ENCODE measurements at regions of chr3 and their contacts with region 1.

Region 1: GRCh38 chr3:47989981-47990440 is 26.2 kb downstream of the MAP4 start:
- DNase-seq: peak; percentile 94
- ATAC-seq: peak; percentile 98
- H3K4me3 ChIP-seq: no peak overlapping the region
- H3K27ac ChIP-seq: no peak overlapping the region
- H3K4me1 ChIP-seq: peaks cover 16% of the 10 kb centered on the region
- H3K27me3 ChIP-seq: no peaks in the 10 kb centered on the region
- CTCF ChIP-seq: peak; percentile 98

Region 2: GRCh38 chr3:47047673-47048072 is 942.3 kb before region 1 on chr3:
- CTCF ChIA-PET with region 1: no interaction called
- POLR2A ChIA-PET with region 1: no interaction called
- intact Hi-C with region 1: no loop called
- DNase-seq: no peak
- ATAC-seq: no peak
- H3K4me3 ChIP-seq: no peak overlapping the region
- H3K27ac ChIP-seq: no peak overlapping the region
- H3K4me1 ChIP-seq: no peaks in the 10 kb centered on the region
- H3K27me3 ChIP-seq: no peaks in the 10 kb centered on the region
- CTCF ChIP-seq: no peak

Region 3: DNA sequence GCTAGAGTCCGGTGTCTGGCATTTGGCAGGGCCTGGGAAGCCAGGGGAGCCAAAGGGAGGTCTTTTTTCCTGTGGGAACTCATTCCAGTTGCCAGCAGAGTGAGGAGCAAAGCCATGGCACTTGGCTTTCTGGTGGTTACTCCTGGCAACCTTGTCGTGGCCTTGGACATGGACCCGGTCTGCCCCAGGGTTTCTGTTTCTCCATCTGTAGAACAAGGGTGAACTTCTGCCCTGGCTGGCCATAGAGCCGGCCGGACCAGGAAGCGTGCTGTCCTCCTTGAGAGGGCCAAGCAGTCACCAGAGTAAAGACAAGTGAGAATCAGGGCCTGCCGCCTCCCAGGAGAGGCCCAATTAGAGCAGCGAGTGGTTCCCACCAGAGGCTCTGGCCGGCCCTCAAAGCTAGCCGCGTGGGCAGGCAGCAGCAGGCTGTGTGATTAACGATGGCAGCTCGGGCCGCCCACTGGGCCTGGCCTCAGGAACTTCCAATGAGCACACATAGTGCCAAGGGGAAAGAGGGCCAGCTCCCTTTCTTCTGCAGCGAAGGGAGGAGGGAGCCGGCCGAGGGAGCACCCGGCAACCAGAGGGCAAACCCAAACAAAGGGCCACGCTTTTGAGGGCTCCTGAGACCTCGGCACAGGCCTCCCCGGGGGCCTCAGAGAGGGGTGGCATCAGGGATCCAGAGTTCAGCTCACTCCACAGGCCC is 447.4 kb before region 1 on chr3:
- CTCF ChIA-PET with region 1: no interaction called
- POLR2A ChIA-PET with region 1: no interaction called
- intact Hi-C with region 1: no loop called
- DNase-seq: no peak
- ATAC-seq: no peak
- H3K4me3 ChIP-seq: no peak overlapping the region
- H3K27ac ChIP-seq: no peak overlapping the region
- H3K4me1 ChIP-seq: no peaks in the 10 kb centered on the region
- H3K27me3 ChIP-seq: no peaks in the 10 kb centered on the region
- CTCF ChIP-seq: no peak

Region 4: DNA sequence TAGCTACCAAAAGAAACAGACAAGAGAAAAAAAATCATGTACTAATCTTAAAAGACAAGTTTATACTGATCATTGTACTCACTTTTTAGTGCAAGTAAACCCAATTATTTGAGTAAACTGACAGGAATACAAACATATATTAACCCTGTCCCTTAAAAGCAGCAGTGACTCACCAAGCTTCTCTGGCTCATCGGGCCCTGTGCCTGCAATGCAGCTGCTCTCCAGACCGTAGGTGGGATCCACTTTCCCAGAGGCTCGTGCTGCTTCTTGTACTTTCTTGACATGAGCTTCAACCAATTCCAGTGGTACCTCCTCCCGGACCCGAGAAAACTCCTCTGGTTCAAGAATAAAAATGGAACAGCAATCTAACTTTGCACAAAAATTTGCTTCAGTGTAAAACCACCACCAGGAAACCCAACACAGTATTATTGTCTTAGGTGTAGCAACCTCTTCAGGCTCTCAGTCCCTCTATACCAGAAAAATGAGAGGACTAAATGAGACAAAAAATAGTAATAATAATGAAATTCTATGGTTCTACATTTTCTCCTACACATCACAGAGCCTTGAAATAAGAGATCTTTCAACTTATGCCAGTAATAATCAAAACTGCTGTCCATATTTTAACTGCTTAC is 328.8 kb before region 1 on chr3:
- CTCF ChIA-PET with region 1: no interaction called
- POLR2A ChIA-PET with region 1: no interaction called
- intact Hi-C with region 1: no loop called
- DNase-seq: peak; percentile 73
- ATAC-seq: peak; percentile 99
- H3K4me3 ChIP-seq: no peak overlapping the region
- H3K27ac ChIP-seq: peak overlapping the region; percentile 28
- H3K4me1 ChIP-seq: peaks cover 13% of the 10 kb centered on the region
- H3K27me3 ChIP-seq: no peaks in the 10 kb centered on the region
- CTCF ChIP-seq: no peak

Region 5: GRCh38 chr3:47877719-47878118 is 112.3 kb before region 1 on chr3:
- CTCF ChIA-PET with region 1: interaction called, 4 read pairs
- POLR2A ChIA-PET with region 1: no interaction called
- intact Hi-C with region 1: loop called (anchors 2 kb)
- DNase-seq: no peak
- ATAC-seq: peak; percentile 40
- H3K4me3 ChIP-seq: no peak overlapping the region
- H3K27ac ChIP-seq: no peak overlapping the region
- H3K4me1 ChIP-seq: no peaks in the 10 kb centered on the region
- H3K27me3 ChIP-seq: no peaks in the 10 kb centered on the region
- CTCF ChIP-seq: no peak

Region 6: DNA sequence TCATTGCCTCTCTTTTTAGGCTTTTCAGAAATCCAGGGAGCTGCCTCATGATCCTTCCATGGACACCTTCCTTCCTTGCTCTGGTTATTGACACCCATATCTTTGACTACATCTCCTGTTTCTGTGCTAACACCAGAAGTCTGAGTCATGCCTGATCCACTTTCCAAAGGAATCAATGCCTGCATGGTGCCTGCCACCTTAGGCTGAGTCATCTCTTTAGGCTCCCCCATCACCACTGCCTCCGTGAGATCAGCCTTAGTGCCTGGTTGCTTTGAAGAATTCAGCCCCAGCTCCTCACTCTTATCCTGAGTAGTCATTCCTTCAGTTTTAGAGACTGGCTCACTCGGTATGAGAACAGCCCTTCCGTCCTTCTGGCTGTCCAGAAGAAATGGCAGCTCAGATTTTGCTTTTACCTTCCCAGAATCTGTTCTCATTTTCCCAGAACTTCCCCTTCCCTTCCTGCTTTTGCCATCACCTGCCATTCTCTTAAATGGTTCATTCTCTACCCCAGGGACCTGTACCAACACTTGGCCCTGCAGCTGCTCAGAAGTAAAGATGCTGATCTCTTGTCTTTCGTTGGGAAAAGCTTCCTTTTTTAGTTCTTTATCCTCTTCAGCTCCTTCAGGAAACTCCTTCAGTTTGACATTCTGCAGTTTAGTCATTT is 79.1 kb before region 1 on chr3:
- CTCF ChIA-PET with region 1: no interaction called
- POLR2A ChIA-PET with region 1: no interaction called
- intact Hi-C with region 1: loop called (anchors 2 kb)
- DNase-seq: peak; percentile 95
- ATAC-seq: peak; percentile 98
- H3K4me3 ChIP-seq: peak overlapping the region; percentile 11; the same call in 1 of the 2 replicates
- H3K27ac ChIP-seq: peak overlapping the region; percentile 63
- H3K4me1 ChIP-seq: peaks cover 19% of the 10 kb centered on the region
- H3K27me3 ChIP-seq: no peaks in the 10 kb centered on the region
- CTCF ChIP-seq: no peak

Region 7: DNA sequence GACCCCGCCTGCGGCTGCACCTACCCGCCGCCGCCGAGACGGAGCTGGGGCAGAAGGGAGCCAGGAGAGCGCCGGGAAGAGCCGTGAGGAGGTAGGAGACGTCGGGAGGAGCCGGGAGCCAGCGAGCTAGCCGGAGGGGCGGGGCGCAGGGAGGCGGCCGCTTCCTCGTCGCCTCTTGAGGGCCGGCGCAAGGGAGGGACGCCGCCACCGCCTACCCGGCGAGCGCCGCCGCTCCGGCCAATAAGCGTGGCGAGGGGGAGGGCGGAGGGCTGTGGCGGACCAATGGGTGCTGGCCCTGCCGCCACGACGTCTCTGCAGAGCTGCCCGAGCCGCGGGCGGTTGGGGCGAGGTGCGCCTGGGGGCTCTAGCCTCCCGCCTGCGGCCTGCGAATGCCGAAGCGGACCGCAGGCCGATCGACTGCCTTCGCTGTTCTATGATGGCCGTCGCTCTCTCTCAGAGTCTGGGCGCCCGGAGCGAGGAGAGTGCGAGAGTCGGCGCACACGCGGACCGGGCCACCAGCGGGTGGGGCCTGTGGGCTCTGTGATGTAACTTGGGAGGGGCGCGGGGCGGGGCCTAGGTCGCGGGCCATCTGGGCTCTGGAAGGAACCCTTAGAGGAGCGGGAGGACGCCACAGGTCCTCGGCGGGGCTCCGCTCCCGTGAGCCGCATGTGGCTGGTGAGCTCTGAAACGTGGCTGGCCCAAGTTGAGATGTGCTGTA is 98.9 kb after region 1 on chr3:
- CTCF ChIA-PET with region 1: interaction called, 4 read pairs
- POLR2A ChIA-PET with region 1: interaction called, 4 read pairs
- intact Hi-C with region 1: loop called (anchors 1 kb)
- DNase-seq: peak; percentile 98
- ATAC-seq: peak; percentile 87
- H3K4me3 ChIP-seq: peak overlapping the region; percentile 84
- H3K27ac ChIP-seq: peak overlapping the region; percentile 97
- H3K4me1 ChIP-seq: peaks cover 32% of the 10 kb centered on the region
- H3K27me3 ChIP-seq: no peaks in the 10 kb centered on the region
- CTCF ChIP-seq: no peak

Measured in PC-3 (cell line).